Astrocyte of the cerebellum (primary cell): ENCODE measurements at regions of chr1 and their contacts with region 1.

Region 1: DNA sequence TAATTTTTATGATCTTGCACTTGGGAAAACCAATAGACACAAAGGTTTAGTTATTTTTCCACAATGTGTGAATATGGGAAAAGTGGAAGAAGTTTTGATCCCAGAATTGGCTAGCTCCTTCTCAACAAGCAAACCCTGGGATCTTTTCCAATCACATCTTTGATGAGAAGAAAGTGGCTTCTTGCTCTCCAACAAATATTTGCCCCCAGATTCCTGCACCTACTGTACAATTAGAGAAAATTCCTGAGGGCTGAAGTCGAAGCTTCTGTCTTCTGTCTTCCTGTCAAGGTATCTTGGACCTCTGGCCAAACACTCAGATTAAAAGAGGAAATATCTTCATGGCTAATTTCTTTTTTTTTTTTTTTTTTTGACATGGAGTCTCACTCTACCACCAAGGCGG is 113.1 kb upstream of the SLC45A1 start:
- DNase-seq: peak; percentile 63
- H3K4me3 ChIP-seq: no peak overlapping the region
- CTCF ChIP-seq: no peak

Region 2: DNA sequence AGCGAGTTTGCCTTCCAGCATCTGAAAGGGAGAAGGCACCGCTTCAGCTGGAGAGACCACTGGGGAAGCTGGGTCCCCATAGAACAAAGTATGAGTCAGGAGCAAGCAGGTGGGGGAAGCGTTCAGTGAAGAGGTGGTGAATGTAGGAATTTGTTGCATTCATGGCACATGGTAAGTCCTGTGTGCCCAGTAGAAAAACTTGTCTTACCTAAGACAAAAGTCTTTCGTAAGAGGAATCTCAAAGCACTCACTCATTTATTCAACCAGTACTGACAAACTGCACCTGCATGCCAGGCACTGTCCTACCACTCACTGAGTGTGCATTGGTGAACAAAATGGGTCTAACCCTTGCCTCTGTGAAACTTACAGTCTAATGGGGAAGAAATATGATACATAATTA is 169.5 kb before region 1 on chr1:
- in situ Hi-C with region 1: loop called (anchors 5 kb)
- DNase-seq: no peak
- H3K4me3 ChIP-seq: no peak overlapping the region
- CTCF ChIP-seq: no peak

Region 3: GRCh38 chr1:8259498-8260290 is 54.9 kb after region 1 on chr1:
- in situ Hi-C with region 1: no loop called
- DNase-seq: peak; percentile 63
- H3K4me3 ChIP-seq: no peak overlapping the region
- CTCF ChIP-seq: no peak

Region 4: DNA sequence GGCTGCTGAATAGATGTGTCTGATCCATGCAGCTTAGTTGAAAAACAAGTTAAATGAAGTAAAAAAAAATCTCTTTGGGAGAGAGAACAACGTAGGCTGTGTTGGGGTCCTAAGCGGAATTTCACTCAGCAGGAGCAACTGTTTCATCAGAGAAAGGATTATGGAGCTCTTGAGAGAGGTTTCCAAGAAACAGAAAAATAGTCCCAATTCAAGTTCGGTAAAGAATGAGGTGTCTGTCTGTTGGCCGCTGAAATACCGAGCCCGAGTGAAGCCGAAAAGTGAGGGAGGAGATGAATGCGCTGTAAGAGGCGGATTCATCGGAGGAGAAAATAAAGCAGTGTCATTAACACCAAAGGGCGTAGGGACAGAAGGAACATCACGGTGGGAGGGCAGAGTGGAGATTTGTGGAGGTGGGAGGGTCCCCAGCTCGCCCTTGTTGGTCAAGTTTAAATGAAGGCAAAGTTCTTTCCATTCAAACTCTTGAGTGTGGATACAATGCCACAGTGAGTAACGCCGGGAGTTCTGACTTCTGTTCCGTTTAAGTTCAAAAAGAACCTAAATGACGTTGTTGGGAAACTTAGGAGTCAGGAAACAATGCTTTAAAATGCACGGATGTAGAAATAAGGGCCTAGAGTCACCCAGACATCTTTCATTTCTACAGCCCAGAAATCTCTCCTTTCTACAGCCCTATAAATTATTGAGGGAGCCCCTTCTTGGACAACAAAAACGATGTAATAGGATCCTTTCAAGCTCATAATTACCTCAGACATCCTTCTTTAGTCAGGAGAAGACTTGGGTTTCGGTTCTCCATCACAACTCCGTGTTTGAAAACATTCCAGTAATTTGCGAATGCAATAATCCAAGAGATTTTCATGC is 97.5 kb after region 1 on chr1:
- in situ Hi-C with region 1: loop called (anchors 5 kb)
- DNase-seq: no peak
- H3K4me3 ChIP-seq: no peak overlapping the region
- CTCF ChIP-seq: no peak